GM12878 (cell line): ENCODE measurements at regions of chr9 and their contacts with region 1.

Region 1: DNA sequence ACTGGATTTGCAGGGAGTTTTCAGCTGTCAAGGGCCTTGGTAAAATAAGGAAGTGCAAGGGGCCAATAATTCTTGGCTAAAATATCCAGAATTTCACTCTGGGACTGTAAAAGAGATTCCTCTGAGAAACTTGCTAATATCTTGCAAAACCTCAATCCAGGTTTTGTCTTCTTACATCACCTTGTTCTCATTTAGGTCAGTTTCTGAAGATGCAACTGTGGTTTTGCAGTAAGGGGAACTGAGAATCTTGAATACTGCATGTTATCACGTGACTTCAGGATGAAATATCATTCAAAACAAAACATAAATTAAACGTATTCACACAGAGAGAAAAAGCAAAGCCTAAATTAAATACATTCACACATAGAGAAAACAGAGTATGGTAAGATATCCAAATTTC is 35.0 kb upstream of the RIC1 start:
- DNase-seq: peak; percentile 90
- ATAC-seq: peak; percentile 55
- H3K4me3 ChIP-seq: 0 out of 2 replicates have a peak overlapping the region, but pooled peaks have one; percentile 9
- H3K27ac ChIP-seq: peak overlapping the region; percentile 93
- H3K4me1 ChIP-seq: peaks cover 51% of the 10 kb centered on the region
- H3K27me3 ChIP-seq: no peaks in the 10 kb centered on the region
- CTCF ChIP-seq: no peak
- EP300 ChIP-seq: peak; percentile 100
- POLR2A ChIP-seq: no peak
- RAD21 ChIP-seq: peak; percentile 11; the same call in 1 of the 2 replicates

Region 2: GRCh38 chr9:4740638-4741364 is 853.1 kb before region 1 on chr9 and contains the start of gene AK3:
- CTCF ChIA-PET with region 1: no interaction called
- POLR2A ChIA-PET with region 1: no interaction called
- RAD21 ChIA-PET with region 1: interaction called, 3 read pairs
- SMC1A ChIA-PET with region 1: no interaction called
- in situ Hi-C with region 1: no loop called
- intact Hi-C with region 1: loop called (anchors 5 kb)
- DNase-seq: no peak
- ATAC-seq: peak; percentile 94
- H3K4me3 ChIP-seq: peak within 1 kb of the TSS; percentile 92
- H3K27ac ChIP-seq: peak within 1 kb of the TSS; percentile 80
- H3K4me1 ChIP-seq: peaks cover 8% of the 10 kb centered on the region
- H3K27me3 ChIP-seq: no peaks in the 10 kb centered on the region
- CTCF ChIP-seq: peak in 2 of 3 experiments; percentile 9 to 54; a peak in 3 of 6 replicates
- EP300 ChIP-seq: no peak
- POLR2A ChIP-seq: peak; percentile 92
- RAD21 ChIP-seq: peak; percentile 34; the same call in 1 of the 2 replicates
- polyA plus RNA-seq, gene AK3: 14.2 to 26.2 TPM

Region 3: GRCh38 chr9:4939118-4939561 is 654.8 kb before region 1 on chr9:
- CTCF ChIA-PET with region 1: interaction called, 3 read pairs
- POLR2A ChIA-PET with region 1: no interaction called
- RAD21 ChIA-PET with region 1: no interaction called
- SMC1A ChIA-PET with region 1: interaction called, 3 read pairs
- in situ Hi-C with region 1: no loop called
- intact Hi-C with region 1: loop called (anchors 5 kb)
- DNase-seq: peak; percentile 93
- ATAC-seq: peak; percentile 92
- H3K4me3 ChIP-seq: no peak overlapping the region
- H3K27ac ChIP-seq: peak overlapping the region; percentile 78
- H3K4me1 ChIP-seq: peaks cover 52% of the 10 kb centered on the region
- H3K27me3 ChIP-seq: no peaks in the 10 kb centered on the region
- CTCF ChIP-seq: no peak
- EP300 ChIP-seq: peak; percentile 83 to 86
- POLR2A ChIP-seq: no peak
- RAD21 ChIP-seq: no peak

Region 4: GRCh38 chr9:5425006-5425628 is 168.8 kb before region 1 on chr9:
- CTCF ChIA-PET with region 1: interaction called, 10 read pairs
- POLR2A ChIA-PET with region 1: interaction called, 4 read pairs
- RAD21 ChIA-PET with region 1: interaction called, 7 read pairs
- SMC1A ChIA-PET with region 1: interaction called, 18 read pairs
- in situ Hi-C with region 1: no loop called
- intact Hi-C with region 1: no loop called
- DNase-seq: peak; percentile 30
- ATAC-seq: peak; percentile 77
- H3K4me3 ChIP-seq: no peak overlapping the region
- H3K27ac ChIP-seq: no peak overlapping the region
- H3K4me1 ChIP-seq: no peaks in the 10 kb centered on the region
- H3K27me3 ChIP-seq: no peaks in the 10 kb centered on the region
- CTCF ChIP-seq: peak; percentile 45 to 61 (median 56); a peak in 5 of 6 replicates
- EP300 ChIP-seq: no peak
- POLR2A ChIP-seq: no peak
- RAD21 ChIP-seq: peak; percentile 78

Region 5: GRCh38 chr9:5459289-5459829 is 134.5 kb before region 1 on chr9:
- CTCF ChIA-PET with region 1: interaction called, 11 read pairs
- POLR2A ChIA-PET with region 1: interaction called, 5 read pairs
- RAD21 ChIA-PET with region 1: interaction called, 13 read pairs
- SMC1A ChIA-PET with region 1: interaction called, 68 read pairs
- in situ Hi-C with region 1: loop called (anchors 5 kb)
- intact Hi-C with region 1: no loop called
- DNase-seq: no peak
- ATAC-seq: peak; percentile 55
- H3K4me3 ChIP-seq: peak overlapping the region; percentile 35
- H3K27ac ChIP-seq: peak overlapping the region; percentile 81
- H3K4me1 ChIP-seq: peaks cover 32% of the 10 kb centered on the region
- H3K27me3 ChIP-seq: no peaks in the 10 kb centered on the region
- CTCF ChIP-seq: no peak
- EP300 ChIP-seq: peak; percentile 69 to 84; a peak in 2 of 4 replicates
- POLR2A ChIP-seq: no peak
- RAD21 ChIP-seq: no peak

Region 6: GRCh38 chr9:5608298-5609225 is 14.7 kb after region 1 on chr9:
- CTCF ChIA-PET with region 1: interaction called, 8 read pairs
- POLR2A ChIA-PET with region 1: interaction called, 3 read pairs
- RAD21 ChIA-PET with region 1: interaction called, 7 read pairs
- SMC1A ChIA-PET with region 1: interaction called, 24 read pairs
- in situ Hi-C with region 1: no loop called
- intact Hi-C with region 1: no loop called
- DNase-seq: no peak
- ATAC-seq: peak; percentile 89
- H3K4me3 ChIP-seq: peak overlapping the region; percentile 53
- H3K27ac ChIP-seq: peak overlapping the region; percentile 70
- H3K4me1 ChIP-seq: peaks cover 10% of the 10 kb centered on the region
- H3K27me3 ChIP-seq: no peaks in the 10 kb centered on the region
- CTCF ChIP-seq: peak in 1 of 3 experiments; percentile 32; a peak in 1 of 6 replicates
- EP300 ChIP-seq: no peak
- POLR2A ChIP-seq: 0 out of 2 replicates have a peak, but pooled peaks have one; percentile 38
- RAD21 ChIP-seq: peak; percentile 49